ENCODE measurements at regions of chr10 and their contacts with region 1.

Region 1: GRCh38 chr10:73625884-73626752 is 15.2 kb downstream of the MYOZ1 start:
- DNase-seq: peak; percentile 97
- H3K4me3 ChIP-seq: peak overlapping the region; percentile 65 to 95 (median 72)
- H3K27ac ChIP-seq: peak overlapping the region; percentile 88 to 91 (median 90)
- H3K4me1 ChIP-seq: peaks cover 0 to 46% (median 16%) of the 10 kb centered on the region in 4 donors
- H3K27me3 ChIP-seq: no peaks in the 10 kb centered on the region
- CTCF ChIP-seq: no peak
- EP300 ChIP-seq: no peak
- POLR2A ChIP-seq: peak; percentile 64

Region 2: DNA sequence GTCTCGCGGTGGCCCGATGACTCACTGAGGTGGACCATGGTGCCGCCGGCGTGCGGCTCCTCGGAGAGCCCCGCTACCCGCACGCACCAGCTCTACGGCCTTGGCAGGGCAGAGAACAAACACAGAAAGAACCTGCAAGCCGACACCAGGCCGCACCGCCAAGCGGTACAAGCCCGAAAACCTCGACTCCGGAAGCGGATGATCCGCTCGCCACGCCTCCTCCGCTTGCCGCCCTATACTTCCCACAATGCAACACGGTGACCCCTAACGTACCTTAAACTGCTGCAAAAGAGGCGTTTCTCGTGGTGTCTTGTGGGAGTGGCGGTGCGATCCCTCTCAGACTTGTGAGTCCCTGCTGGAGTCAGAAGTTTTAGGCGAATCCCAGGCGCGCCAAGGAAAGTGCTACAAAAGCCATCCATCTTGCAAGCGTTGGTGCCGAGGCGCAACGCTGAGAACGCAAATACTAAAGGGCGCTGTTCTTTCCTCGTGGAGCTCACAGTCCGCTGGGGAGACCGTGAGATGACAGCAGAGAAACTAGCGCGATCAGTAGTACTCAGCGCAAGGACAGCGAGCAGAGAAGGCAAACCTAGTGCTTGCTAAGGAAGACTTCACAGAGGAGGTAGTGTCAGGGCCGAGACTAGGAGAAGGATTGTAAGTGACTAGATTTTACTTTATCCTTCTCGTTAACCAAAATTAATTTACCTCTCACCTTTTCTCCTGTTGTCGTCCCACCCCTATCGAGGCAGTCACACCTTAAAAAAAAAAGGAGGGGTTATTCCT is 373.5 kb before region 1 on chr10 and contains the start of gene MRPS16:
- in situ Hi-C with region 1: loop called in 1 of 4 experiments (anchors 25 kb)
- intact Hi-C with region 1: no loop called
- DNase-seq: peak; percentile 96
- H3K4me3 ChIP-seq: peak within 1 kb of the TSS; percentile 71 to 92 (median 78)
- H3K27ac ChIP-seq: peak within 1 kb of the TSS; percentile 88 to 96 (median 93)
- H3K4me1 ChIP-seq: peaks cover 17 to 30% (median 26%) of the 10 kb centered on the region in 4 donors
- H3K27me3 ChIP-seq: no peaks in the 10 kb centered on the region
- CTCF ChIP-seq: peak in 1 of 5 experiments; percentile 23
- EP300 ChIP-seq: no peak
- POLR2A ChIP-seq: peak; percentile 86
- total RNA-seq, gene MRPS16: 41.0 to 54.5 (median 46.6) TPM

Region 3: DNA sequence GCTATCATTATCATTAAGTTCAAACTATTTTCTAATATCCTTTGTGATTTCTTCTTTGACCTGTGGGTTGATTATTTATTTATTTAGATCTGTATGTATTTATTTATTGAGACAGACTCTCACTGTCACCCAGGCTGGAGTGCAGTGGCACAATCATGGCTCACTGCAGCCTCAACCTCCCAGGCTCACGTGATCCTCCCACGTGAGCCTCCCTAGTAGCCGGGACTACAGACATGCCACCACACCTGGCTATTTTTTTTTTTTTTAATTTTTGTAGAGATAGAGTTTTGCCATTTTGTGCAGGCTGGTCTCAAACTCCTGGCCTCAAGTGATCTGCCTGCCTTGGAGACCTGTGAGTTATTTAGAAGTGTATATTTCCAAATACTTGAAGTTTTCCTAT is 345.0 kb before region 1 on chr10:
- in situ Hi-C with region 1: no loop called
- intact Hi-C with region 1: no loop called
- DNase-seq: no peak
- H3K4me3 ChIP-seq: no peak overlapping the region
- H3K27ac ChIP-seq: no peak overlapping the region
- H3K4me1 ChIP-seq: no peaks in the 10 kb centered on the region
- H3K27me3 ChIP-seq: no peaks in the 10 kb centered on the region
- CTCF ChIP-seq: no peak
- EP300 ChIP-seq: no peak
- POLR2A ChIP-seq: no peak